GM12878 (cell line): ENCODE measurements at regions of chr14 and their contacts with region 1.

Region 1: DNA sequence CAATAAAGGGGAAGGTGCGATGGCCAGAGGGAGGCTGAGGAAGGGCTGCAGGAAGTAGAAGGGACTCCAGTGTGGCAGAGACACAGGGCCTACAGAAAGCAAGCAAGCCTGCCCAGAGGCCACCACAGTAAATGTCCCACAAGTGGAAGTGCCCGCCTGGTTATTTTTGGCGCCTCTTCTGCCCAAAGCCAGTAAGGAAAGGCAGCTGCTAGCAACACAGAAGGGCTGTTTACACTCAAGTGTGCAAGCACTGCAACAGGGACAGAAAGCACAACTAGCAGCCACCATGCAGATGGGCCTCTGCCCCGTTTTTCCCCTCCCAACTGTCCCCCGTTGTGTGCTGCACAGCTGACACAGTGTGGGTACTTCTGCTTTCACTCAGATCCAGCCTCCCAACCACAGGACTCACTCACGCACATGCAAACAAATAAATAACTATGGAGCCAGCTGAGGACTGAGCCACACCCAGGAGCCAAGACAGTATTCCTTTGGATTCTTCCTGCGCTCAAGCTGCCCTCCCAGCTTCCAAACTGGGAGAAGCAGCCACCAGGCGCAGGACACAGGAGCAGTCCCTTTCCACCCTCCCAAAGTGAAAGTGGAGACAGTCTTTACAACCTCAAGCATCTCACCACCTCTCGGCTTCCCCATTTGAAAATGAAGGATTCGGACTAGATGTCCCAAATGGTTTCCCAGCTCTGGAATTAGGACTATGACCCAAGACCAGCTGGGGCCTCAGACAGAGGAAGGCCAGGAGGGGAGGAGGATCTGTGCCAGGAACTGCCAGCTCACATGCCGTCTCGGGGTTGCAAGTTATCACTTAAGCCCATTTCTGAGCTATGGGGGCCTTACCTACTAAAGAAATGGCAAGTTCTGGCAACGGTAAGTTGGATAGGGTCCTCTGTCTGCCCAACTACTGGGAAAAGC is 40.0 kb upstream of the PNMA1 start:
- DNase-seq: peak; percentile 61
- ATAC-seq: peak; percentile 53
- H3K4me3 ChIP-seq: peak overlapping the region; percentile 83
- H3K27ac ChIP-seq: peak overlapping the region; percentile 94
- H3K4me1 ChIP-seq: peaks cover 68% of the 10 kb centered on the region
- H3K27me3 ChIP-seq: no peaks in the 10 kb centered on the region
- CTCF ChIP-seq: no peak
- EP300 ChIP-seq: peak; percentile 82 to 84
- POLR2A ChIP-seq: peak; percentile 68
- RAD21 ChIP-seq: no peak

Region 2: GRCh38 chr14:73741386-73741875 is 12.8 kb before region 1 on chr14:
- CTCF ChIA-PET with region 1: interaction called, 95 read pairs
- POLR2A ChIA-PET with region 1: interaction called, 54 read pairs
- RAD21 ChIA-PET with region 1: interaction called, 114 read pairs
- SMC1A ChIA-PET with region 1: interaction called, 60 read pairs
- in situ Hi-C with region 1: no loop called
- intact Hi-C with region 1: no loop called
- DNase-seq: no peak
- ATAC-seq: peak; percentile 60
- H3K4me3 ChIP-seq: peak overlapping the region; percentile 55
- H3K27ac ChIP-seq: peak overlapping the region; percentile 81
- H3K4me1 ChIP-seq: peaks cover 55% of the 10 kb centered on the region
- H3K27me3 ChIP-seq: no peaks in the 10 kb centered on the region
- CTCF ChIP-seq: no peak
- EP300 ChIP-seq: no peak
- POLR2A ChIP-seq: no peak
- RAD21 ChIP-seq: no peak

Region 3: GRCh38 chr14:73771848-73772638 is 17.8 kb after region 1 on chr14:
- CTCF ChIA-PET with region 1: interaction called, 41 read pairs
- POLR2A ChIA-PET with region 1: interaction called, 255 read pairs
- RAD21 ChIA-PET with region 1: interaction called, 710 read pairs
- SMC1A ChIA-PET with region 1: interaction called, 214 read pairs
- in situ Hi-C with region 1: no loop called
- intact Hi-C with region 1: no loop called
- DNase-seq: peak; percentile 85
- ATAC-seq: peak; percentile 76
- H3K4me3 ChIP-seq: peak overlapping the region; percentile 65; the same call in 1 of the 2 replicates
- H3K27ac ChIP-seq: peak overlapping the region; percentile 93
- H3K4me1 ChIP-seq: peaks cover 71% of the 10 kb centered on the region
- H3K27me3 ChIP-seq: no peaks in the 10 kb centered on the region
- CTCF ChIP-seq: peak in 2 of 3 experiments; percentile 0 to 16; a peak in 1 of 6 replicates
- EP300 ChIP-seq: peak; percentile 73 to 81; a peak in 3 of 4 replicates
- POLR2A ChIP-seq: peak; percentile 82
- RAD21 ChIP-seq: no peak

Region 4: DNA sequence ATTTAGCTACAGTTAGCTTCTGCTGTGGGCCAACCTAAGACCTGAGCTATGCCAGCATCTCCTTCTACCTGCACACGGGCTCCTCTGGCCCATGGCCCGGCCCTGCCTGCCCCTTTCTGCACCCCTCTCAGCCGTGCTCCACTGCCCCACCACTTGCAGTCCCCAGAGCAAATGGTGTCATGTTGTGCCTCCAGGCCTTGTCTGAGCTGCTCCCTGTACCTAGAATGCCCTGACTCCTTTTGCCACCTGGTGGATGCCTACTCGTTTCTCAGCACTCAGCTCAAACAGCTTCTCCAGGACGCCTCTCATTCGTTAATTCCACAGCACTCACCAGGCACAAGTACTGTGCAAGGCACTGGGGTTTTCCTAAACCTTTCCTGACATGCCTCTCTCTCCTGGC is 23.2 kb after region 1 on chr14:
- CTCF ChIA-PET with region 1: interaction called, 41 read pairs
- POLR2A ChIA-PET with region 1: interaction called, 255 read pairs
- RAD21 ChIA-PET with region 1: interaction called, 710 read pairs
- SMC1A ChIA-PET with region 1: interaction called, 214 read pairs
- in situ Hi-C with region 1: no loop called
- intact Hi-C with region 1: no loop called
- DNase-seq: no peak
- ATAC-seq: peak; percentile 68
- H3K4me3 ChIP-seq: no peak overlapping the region
- H3K27ac ChIP-seq: no peak overlapping the region
- H3K4me1 ChIP-seq: peaks cover 68% of the 10 kb centered on the region
- H3K27me3 ChIP-seq: no peaks in the 10 kb centered on the region
- CTCF ChIP-seq: peak in 1 of 3 experiments; percentile 32; a peak in 2 of 6 replicates
- EP300 ChIP-seq: no peak
- POLR2A ChIP-seq: no peak
- RAD21 ChIP-seq: no peak

Region 5: DNA sequence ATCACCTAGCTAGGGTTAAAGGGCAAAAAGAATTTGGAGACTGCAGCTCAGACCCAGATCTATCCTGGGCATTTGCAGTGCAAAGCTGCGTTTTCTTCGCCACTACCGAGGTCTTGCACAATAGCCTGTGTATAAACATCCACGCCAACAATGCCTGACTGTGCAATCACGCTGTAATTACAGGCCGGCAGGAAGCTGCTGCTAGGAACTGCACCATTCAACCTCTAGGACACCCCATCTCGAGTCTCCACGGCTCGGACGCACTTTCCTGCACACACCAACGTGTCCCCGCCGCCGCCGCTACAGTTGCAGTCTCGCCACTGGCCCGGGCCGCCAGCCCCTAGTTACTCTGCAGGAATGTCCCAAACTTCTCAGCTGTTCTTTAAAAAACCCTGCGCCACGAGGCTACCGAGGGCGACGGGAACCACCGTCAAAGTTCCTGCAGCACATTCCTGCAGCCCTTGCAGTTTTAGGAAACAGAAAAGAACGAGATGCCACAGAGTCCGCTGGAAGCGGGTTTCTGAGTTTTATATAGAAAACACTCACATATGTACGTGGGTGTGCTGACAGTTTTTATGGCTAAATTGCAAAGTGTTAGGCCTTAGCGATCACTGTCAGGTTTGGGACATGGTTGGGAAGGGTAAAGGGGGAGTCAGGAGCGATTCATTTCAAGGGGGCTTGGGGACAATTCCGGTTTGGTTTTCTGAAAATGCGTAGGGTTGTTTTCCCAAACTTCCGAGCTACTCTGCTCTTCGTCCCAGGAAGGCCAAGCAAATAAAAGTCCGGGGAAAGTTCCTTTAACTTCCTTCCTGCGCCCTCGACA is 31.9 kb after region 1 on chr14:
- CTCF ChIA-PET with region 1: interaction called, 52 read pairs
- POLR2A ChIA-PET with region 1: interaction called, 142 read pairs
- RAD21 ChIA-PET with region 1: interaction called, 710 read pairs
- SMC1A ChIA-PET with region 1: interaction called, 86 read pairs
- in situ Hi-C with region 1: no loop called
- intact Hi-C with region 1: loop called (anchors 5 kb)
- DNase-seq: no peak
- ATAC-seq: peak; percentile 75
- H3K4me3 ChIP-seq: peak overlapping the region; percentile 97
- H3K27ac ChIP-seq: peak overlapping the region; percentile 94
- H3K4me1 ChIP-seq: peaks cover 41% of the 10 kb centered on the region
- H3K27me3 ChIP-seq: no peaks in the 10 kb centered on the region
- CTCF ChIP-seq: no peak
- EP300 ChIP-seq: no peak
- POLR2A ChIP-seq: peak; percentile 81
- RAD21 ChIP-seq: no peak

Region 6: DNA sequence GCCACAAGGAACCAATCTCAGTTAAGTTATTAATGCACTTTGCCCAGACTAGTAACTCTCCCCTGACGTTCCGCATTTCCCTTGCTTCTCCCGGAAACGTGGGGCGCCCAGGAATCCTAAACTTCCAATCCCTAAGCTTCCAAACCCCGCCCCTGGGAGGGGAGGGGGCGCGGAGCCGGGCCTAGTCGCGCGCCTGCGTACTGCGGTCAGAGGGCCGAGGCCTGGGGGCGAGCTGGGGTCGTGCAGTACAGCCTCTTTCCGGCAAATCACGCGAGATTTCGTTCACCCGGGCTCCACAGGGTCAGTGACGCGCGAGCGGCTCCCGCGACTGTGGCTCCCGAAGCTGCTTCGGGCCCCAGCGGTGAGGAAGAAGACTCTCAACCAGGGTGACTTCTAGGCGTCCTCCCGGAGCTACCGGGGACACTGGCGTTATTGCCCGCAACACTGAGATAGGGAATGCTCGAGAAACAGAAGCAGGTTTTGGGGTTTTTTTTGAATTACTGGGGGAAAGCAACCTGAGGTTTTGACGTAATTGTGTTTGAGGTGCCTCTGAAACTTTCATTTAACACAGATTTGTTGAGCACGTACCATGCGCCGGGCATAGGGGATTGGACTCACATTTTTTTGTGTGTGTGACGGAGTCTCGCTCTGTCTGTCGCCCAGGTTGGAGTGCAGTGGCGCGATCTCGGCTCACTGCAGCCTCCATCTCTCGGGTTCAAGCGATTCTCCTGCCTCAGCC is 97.6 kb after region 1 on chr14 and contains the start of gene PTGR2:
- CTCF ChIA-PET with region 1: interaction called, 5 read pairs
- POLR2A ChIA-PET with region 1: no interaction called
- RAD21 ChIA-PET with region 1: interaction called, 13 read pairs
- SMC1A ChIA-PET with region 1: interaction called, 3 read pairs
- in situ Hi-C with region 1: no loop called
- intact Hi-C with region 1: no loop called
- DNase-seq: peak; percentile 74
- ATAC-seq: peak; percentile 97
- H3K4me3 ChIP-seq: peak within 1 kb of the TSS; percentile 76
- H3K27ac ChIP-seq: peak within 1 kb of the TSS; percentile 61
- H3K4me1 ChIP-seq: peaks cover 3% of the 10 kb centered on the region; the same call in 1 of the 2 replicates
- H3K27me3 ChIP-seq: no peaks in the 10 kb centered on the region
- CTCF ChIP-seq: peak in 1 of 3 experiments; percentile 15; a peak in 1 of 6 replicates
- EP300 ChIP-seq: no peak
- POLR2A ChIP-seq: peak; percentile 93
- RAD21 ChIP-seq: no peak
- polyA plus RNA-seq, gene PTGR2: 8.9 to 9.6 TPM